OCI-LY7 (cell line): ENCODE measurements at regions of chr12 and their contacts with region 1.

Region 1: GRCh38 chr12:62259993-62260732 is at the start of gene USP15:
- DNase-seq: peak; percentile 98
- H3K4me3 ChIP-seq: peak within 1 kb of the TSS; percentile 92
- H3K27ac ChIP-seq: peak within 1 kb of the TSS; percentile 90
- H3K4me1 ChIP-seq: peaks cover 41% of the 10 kb centered on the region
- CTCF ChIP-seq: peak; percentile 65
- total RNA-seq, gene USP15: 43.3 and 65.7 TPM in 2 replicates

Region 2: GRCh38 chr12:62466594-62467491 is 206.7 kb after region 1 on chr12 and contains the start of gene MON2:
- CTCF ChIA-PET with region 1: no interaction called
- POLR2A ChIA-PET with region 1: interaction called, 4 read pairs
- intact Hi-C with region 1: loop called (anchors 10 kb)
- DNase-seq: peak; percentile 89
- H3K4me3 ChIP-seq: peak within 1 kb of the TSS; percentile 99
- H3K27ac ChIP-seq: peak within 1 kb of the TSS; percentile 71
- H3K4me1 ChIP-seq: peaks cover 19% of the 10 kb centered on the region
- CTCF ChIP-seq: 0 out of 2 replicates have a peak, but pooled peaks have one; percentile 12
- total RNA-seq, gene MON2: 26.6 and 31.6 TPM in 2 replicates

Region 3: GRCh38 chr12:62799126-62799736 is 539.1 kb after region 1 on chr12:
- CTCF ChIA-PET with region 1: no interaction called
- POLR2A ChIA-PET with region 1: no interaction called
- intact Hi-C with region 1: loop called (anchors 5 kb)
- DNase-seq: peak; percentile 76
- H3K4me3 ChIP-seq: no peak overlapping the region
- H3K27ac ChIP-seq: no peak overlapping the region
- H3K4me1 ChIP-seq: no peaks in the 10 kb centered on the region
- CTCF ChIP-seq: peak; percentile 94